Activated CD4-positive, alpha-beta memory T cell treated with anti-CD3 and anti-CD28 coated beads for 36 hours (primary cell): ENCODE measurements at regions of chr14 and their contacts with region 1.

Region 1: DNA sequence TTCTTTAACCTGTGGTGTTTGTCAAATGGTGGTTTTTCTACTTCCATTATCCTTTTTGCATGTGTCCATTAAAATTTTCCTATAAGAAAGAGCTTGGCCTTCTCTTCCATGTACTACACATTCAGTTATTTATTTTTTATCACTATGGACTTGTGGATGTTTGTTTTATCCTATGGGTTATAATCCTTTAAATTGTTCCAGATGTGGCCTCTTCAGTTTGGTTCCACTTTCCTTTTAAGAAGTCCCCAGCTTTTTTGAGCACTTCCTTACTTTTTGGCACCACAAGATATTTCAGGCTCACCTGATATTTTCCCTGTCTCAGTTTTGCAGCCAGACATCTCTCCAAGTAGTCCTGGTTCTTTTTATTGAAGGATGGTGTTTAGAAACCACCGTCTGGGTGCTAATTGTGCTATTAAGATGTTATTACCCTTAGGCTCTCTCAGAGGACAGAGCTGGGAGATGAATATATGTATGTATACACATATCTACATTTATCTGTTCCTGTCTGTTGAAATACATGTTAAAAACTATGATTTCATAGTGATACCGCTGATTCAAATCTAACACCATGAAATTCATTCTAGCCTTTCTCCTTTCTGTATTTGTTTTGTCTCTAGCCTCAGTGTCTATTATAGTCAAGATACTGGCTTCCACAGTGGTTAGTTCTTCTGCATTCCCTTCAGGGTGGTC is 408.5 kb upstream of the RGS6 start:
- DNase-seq: no peak
- H3K4me3 Mint-ChIP-seq: no peak overlapping the region
- H3K27ac Mint-ChIP-seq: no peak overlapping the region
- H3K4me1 Mint-ChIP-seq: peaks cover 14% of the 10 kb centered on the region
- H3K27me3 Mint-ChIP-seq: no peaks in the 10 kb centered on the region

Region 2: DNA sequence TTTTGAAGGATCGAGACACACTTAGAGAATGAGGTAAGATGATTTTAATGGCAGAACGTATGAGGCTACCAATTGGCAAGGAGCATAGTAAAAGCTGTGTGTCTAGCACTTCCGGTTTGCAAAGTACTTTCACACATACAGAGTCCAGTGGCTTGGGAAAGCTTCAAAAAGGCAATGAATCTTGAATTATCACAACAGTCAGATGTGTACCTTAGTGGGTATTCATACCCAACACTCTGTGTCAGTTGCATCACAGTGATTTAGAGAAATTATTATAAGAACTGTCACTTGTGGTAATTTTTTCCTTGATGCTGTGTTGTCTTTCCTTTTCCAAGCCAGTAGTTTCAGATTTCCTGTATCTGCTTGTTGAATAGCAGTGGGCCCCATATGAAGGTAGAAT is 192.4 kb before region 1 on chr14:
- CTCF ChIA-PET with region 1: no interaction called
- POLR2A ChIA-PET with region 1: no interaction called
- intact Hi-C with region 1: loop called (anchors 1 kb)
- DNase-seq: no peak
- H3K4me3 Mint-ChIP-seq: no peak overlapping the region
- H3K27ac Mint-ChIP-seq: peak overlapping the region; percentile 44
- H3K4me1 Mint-ChIP-seq: peaks cover 59% of the 10 kb centered on the region
- H3K27me3 Mint-ChIP-seq: no peaks in the 10 kb centered on the region

Region 3: DNA sequence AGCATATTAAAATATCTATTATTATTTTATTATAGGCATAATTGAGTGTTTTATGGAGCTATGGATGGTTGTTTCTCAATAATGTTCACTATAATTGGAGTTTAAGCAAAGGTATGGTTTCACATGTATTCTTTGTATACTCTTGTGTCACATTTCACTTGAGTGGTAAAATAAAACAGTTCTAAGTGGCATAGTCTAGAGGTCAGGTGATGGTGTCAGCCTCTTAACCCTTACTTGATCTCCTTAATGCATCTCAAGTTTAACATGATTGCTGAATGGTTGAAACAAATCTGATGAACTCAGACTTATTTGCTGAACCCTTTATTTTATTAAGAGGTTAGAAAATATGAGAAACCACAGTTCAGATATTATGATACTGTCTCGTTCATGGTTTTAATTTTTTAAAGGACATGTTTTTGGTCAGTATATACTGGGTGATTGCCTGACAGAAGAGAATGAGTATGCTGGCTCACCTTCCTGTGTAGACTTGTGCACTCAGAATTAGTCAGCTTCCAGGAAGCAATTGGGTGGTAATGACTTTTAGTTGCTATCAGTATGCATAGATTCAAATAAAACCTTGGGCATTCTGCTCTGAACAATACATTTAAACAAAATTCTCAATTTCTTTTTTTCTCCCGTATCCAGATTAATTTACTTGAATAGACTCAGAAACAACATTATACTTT is 151.9 kb before region 1 on chr14:
- CTCF ChIA-PET with region 1: no interaction called
- POLR2A ChIA-PET with region 1: no interaction called
- intact Hi-C with region 1: no loop called
- DNase-seq: no peak
- H3K4me3 Mint-ChIP-seq: no peak overlapping the region
- H3K27ac Mint-ChIP-seq: peak overlapping the region; percentile 2
- H3K4me1 Mint-ChIP-seq: peaks cover 20% of the 10 kb centered on the region
- H3K27me3 Mint-ChIP-seq: no peaks in the 10 kb centered on the region

Region 4: DNA sequence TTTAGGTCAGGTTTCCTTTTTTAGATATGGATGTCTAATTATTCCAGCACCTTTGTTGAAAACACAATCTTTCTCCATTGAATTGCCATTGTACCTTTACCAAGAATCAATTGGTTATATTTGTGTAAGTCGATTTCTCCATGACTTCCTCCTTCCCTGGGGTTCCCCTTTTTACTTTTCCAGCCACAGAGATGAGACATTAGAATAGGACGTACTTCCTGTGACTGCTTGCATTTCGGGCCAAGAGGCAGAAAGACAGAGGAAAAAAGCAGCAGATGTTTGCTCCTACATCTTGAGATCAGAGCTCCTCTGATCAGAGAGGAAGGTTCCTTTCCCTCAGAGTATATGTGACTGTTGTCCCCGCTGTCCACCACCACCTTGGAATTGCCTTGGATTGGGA is 45.2 kb before region 1 on chr14:
- CTCF ChIA-PET with region 1: no interaction called
- POLR2A ChIA-PET with region 1: no interaction called
- intact Hi-C with region 1: loop called (anchors 10 kb)
- DNase-seq: peak; percentile 13
- H3K4me3 Mint-ChIP-seq: no peak overlapping the region
- H3K27ac Mint-ChIP-seq: peak overlapping the region; percentile 4
- H3K4me1 Mint-ChIP-seq: peaks cover 26% of the 10 kb centered on the region
- H3K27me3 Mint-ChIP-seq: no peaks in the 10 kb centered on the region

Region 5: DNA sequence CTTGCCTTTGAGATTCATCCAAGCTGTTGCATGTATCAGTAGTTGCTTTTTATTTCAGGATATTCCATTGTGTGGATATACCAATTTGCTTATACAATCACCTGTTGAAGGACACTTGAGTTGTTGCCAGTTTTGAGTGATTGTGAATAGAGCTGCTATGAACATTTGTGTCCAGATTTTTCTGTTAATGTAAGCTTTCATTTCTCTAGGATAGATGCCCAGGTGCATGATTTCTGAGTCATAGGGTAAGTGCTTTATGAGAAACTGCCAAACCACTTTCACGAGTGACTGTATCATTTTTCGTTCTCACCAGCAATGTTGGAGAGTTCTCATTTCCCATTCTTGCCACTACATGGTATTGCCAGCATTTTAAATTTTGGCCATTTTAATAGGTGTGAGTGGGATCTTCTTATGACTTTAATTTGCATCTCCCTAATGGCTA is 26.1 kb before region 1 on chr14:
- CTCF ChIA-PET with region 1: interaction called, 4 read pairs
- POLR2A ChIA-PET with region 1: no interaction called
- intact Hi-C with region 1: loop called (anchors 1 kb)
- DNase-seq: no peak
- H3K4me3 Mint-ChIP-seq: no peak overlapping the region
- H3K27ac Mint-ChIP-seq: no peak overlapping the region
- H3K4me1 Mint-ChIP-seq: peaks cover 15% of the 10 kb centered on the region
- H3K27me3 Mint-ChIP-seq: no peaks in the 10 kb centered on the region

Region 6: GRCh38 chr14:71591929-71592328 is 68.2 kb after region 1 on chr14:
- CTCF ChIA-PET with region 1: no interaction called
- POLR2A ChIA-PET with region 1: no interaction called
- intact Hi-C with region 1: no loop called
- DNase-seq: peak; percentile 53
- H3K4me3 Mint-ChIP-seq: no peak overlapping the region
- H3K27ac Mint-ChIP-seq: peak overlapping the region; percentile 29
- H3K4me1 Mint-ChIP-seq: peaks cover 41% of the 10 kb centered on the region
- H3K27me3 Mint-ChIP-seq: no peaks in the 10 kb centered on the region